PC-3 (cell line): ENCODE measurements at regions of chr17 and their contacts with region 1.

Region 1: DNA sequence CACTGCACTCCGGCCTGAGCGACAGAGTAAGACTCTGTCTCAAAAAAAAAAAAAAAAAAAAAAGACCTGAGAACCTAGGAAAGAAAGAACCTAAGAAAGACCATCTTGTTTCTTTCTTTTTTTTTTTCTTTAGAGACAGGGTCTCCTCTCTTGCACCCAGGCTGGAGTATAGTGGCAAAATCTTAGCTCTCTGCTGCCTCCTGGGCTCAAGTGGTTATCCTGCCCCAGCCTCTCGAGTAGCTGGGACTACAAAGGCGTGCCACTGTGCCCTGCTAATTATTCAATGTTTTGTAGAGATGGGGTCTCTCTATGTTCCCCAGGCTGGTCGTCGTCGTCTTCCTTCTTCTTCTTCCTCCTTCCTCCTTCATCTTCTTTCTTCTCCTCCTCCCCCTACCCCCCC is 7.8 kb upstream of the BIRC5 start:
- DNase-seq: no peak
- ATAC-seq: no peak
- H3K4me3 ChIP-seq: no peak overlapping the region
- H3K27ac ChIP-seq: no peak overlapping the region
- H3K4me1 ChIP-seq: no peaks in the 10 kb centered on the region
- H3K27me3 ChIP-seq: no peaks in the 10 kb centered on the region
- CTCF ChIP-seq: no peak

Region 2: GRCh38 chr17:77914385-77915254 is 291.7 kb before region 1 on chr17:
- CTCF ChIA-PET with region 1: no interaction called
- POLR2A ChIA-PET with region 1: no interaction called
- intact Hi-C with region 1: no loop called
- DNase-seq: no peak
- ATAC-seq: peak; percentile 78
- H3K4me3 ChIP-seq: no peak overlapping the region
- H3K27ac ChIP-seq: no peak overlapping the region
- H3K4me1 ChIP-seq: no peaks in the 10 kb centered on the region
- H3K27me3 ChIP-seq: peaks cover 60% of the 10 kb centered on the region
- CTCF ChIP-seq: peak; percentile 50

Region 3: DNA sequence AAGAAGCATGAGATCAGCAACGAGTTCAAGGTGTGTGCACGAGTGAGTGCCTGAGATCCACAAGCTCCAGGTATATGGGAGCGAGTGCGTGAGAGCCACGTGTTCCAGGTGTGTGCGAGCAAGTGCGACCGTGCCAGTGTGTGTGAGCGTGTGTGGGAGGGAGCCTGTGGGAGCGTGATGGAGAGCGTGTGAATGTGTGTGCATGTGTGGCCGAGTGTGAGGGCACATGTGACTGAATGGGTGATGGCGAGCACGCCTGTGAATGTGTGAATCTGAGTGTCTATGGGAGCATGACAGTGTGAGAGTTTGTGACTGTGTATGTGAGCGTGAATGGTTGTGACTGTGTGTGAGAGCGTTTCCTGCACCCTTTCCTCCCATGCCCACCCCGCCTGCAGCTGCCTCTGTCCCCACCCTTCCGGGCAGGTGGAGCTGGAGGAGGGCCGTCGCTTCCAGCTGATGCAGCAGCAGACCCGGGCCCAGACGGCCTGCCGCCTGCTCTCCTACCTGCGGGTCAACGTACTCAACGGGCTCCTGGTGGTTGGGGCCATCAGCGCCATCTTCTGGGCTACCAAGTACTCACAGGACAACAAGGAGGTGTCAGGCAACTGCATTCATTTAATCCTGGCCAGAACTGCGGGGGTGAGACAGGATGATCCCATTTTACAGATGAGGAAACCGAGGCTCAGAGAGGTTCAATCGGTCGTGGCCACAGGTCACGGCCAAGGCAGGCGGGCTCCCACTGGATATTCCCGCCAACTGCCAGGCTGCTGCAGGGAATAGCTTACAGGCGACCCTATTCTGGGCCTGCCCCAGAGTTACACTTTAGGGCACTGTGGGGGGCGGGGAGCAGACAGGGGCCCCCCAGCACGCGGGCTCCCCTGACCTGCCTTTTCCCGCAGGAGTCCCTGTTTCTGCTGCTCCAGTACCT is 72.1 kb before region 1 on chr17:
- CTCF ChIA-PET with region 1: no interaction called
- POLR2A ChIA-PET with region 1: no interaction called
- intact Hi-C with region 1: no loop called
- DNase-seq: peak; percentile 73
- ATAC-seq: peak; percentile 62
- H3K4me3 ChIP-seq: no peak overlapping the region
- H3K27ac ChIP-seq: no peak overlapping the region
- H3K4me1 ChIP-seq: peaks cover 12% of the 10 kb centered on the region
- H3K27me3 ChIP-seq: no peaks in the 10 kb centered on the region
- CTCF ChIP-seq: peak; percentile 85

Region 4: DNA sequence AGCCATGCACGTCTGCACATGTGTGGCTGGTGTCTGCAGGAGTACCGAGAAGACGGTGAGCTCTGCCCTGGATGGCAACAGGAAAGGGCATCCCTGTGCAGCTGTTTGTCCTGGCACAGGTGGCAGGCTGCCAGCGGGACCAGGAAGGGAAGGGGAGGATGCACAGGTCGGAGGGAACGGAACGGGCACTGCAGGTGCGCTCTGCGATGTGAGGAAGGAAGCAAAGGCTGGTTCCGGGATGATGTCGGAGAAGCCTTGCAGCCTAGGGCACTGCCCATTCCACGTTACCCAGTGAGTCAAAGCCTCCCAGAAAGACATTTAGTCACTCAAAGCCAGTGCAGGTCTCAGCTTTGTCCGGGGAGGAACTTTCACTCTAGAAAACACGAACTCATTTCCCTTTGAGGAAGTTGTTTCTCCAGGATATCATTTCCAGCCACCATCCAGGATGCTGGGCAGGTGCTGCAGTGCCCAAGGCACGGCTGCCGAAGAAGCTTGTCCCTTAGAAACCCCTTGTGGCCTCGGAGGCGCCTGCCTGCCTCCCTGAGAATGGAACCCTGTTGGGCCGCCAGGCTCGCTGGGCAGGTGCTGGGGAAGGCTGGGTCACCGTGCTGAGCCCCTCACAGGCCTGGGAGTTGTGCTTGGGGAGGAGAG is 20.6 kb after region 1 on chr17:
- CTCF ChIA-PET with region 1: interaction called, 12 read pairs
- POLR2A ChIA-PET with region 1: interaction called, 5 read pairs
- intact Hi-C with region 1: no loop called
- DNase-seq: peak; percentile 71
- ATAC-seq: peak; percentile 89
- H3K4me3 ChIP-seq: peak overlapping the region; percentile 26; the same call in 1 of the 2 replicates
- H3K27ac ChIP-seq: no peak overlapping the region
- H3K4me1 ChIP-seq: peaks cover 8% of the 10 kb centered on the region; the same call in 1 of the 2 replicates
- H3K27me3 ChIP-seq: peaks cover 3% of the 10 kb centered on the region; the same call in 1 of the 2 replicates
- CTCF ChIP-seq: no peak